ENCODE measurements at regions of chr11 and their contacts with region 1.

Region 1: DNA sequence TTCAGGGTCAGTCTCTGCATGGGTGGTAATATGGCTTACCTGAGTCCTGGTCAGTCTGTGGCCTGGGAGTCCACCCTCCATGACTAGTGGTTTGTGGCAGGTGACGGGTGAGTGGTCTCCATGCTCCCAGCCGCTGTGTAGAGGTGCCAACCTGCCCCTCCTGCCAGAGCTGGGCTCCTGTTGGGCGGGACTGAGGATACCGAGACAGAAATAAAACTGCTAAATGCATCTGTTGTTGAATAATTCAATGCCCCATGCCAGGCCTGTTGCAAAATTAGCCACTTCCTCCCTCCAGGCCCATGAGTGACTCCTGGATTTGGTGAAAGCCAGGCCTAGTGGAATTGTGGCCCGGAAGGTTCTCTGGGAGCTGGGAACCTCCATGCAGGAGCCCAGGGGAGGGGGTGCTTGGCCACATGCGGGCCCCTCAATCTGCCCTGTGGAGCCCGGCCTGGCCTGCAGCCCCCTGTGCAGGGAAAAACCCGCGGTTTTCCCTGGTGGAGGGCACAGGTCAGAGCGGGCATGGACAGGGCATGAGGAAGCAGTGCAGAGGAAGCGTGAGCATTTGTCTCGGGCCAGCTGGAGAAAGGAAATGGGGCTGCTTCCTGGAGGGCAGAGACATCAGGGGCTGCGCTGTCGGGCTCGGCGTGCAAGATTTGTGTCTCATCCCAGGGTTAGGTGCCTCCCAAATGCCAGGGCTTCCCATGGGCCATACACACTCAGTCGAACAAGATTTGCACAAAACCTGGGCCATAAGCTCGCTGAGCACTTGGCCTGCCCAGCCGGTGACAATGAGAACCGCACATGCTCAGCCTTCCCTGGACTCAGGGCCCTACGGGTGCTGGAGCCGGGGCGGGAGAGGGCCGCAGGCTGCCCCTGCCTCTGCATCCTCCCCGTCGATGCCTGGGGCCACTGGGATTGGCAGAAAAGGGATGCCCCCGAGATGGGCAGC is 66.9 kb downstream of the KCNQ1 start:
- DNase-seq: peak; percentile 71

Region 2: GRCh38 chr11:2180775-2181370 is 330.8 kb before region 1 on chr11:
- intact Hi-C with region 1: loop called in 1 of 2 experiments (anchors 1 kb)
- DNase-seq: no peak

Region 3: GRCh38 chr11:4203603-4204360 is 1692.1 kb after region 1 on chr11:
- intact Hi-C with region 1: loop called in 1 of 2 experiments (anchors 10 kb)
- DNase-seq: no peak

Measured in posterior vena cava (tissue), 2 donors.